ENCODE measurements at regions of chr11 and their contacts with region 1.

Region 1: GRCh38 chr11:12087075-12088004 is 23.1 kb upstream of the MICAL2 start:
- DNase-seq: peak; percentile 74
- ATAC-seq: peak; percentile 16
- H3K4me3 ChIP-seq: peak overlapping the region; percentile 51; the same call in 1 of the 2 replicates
- H3K27ac ChIP-seq: peak overlapping the region; percentile 99
- H3K4me1 ChIP-seq: peaks cover 72% of the 10 kb centered on the region
- H3K27me3 ChIP-seq: no peaks in the 10 kb centered on the region
- CTCF ChIP-seq: 0 out of 2 replicates have a peak, but pooled peaks have one; percentile 11

Region 2: DNA sequence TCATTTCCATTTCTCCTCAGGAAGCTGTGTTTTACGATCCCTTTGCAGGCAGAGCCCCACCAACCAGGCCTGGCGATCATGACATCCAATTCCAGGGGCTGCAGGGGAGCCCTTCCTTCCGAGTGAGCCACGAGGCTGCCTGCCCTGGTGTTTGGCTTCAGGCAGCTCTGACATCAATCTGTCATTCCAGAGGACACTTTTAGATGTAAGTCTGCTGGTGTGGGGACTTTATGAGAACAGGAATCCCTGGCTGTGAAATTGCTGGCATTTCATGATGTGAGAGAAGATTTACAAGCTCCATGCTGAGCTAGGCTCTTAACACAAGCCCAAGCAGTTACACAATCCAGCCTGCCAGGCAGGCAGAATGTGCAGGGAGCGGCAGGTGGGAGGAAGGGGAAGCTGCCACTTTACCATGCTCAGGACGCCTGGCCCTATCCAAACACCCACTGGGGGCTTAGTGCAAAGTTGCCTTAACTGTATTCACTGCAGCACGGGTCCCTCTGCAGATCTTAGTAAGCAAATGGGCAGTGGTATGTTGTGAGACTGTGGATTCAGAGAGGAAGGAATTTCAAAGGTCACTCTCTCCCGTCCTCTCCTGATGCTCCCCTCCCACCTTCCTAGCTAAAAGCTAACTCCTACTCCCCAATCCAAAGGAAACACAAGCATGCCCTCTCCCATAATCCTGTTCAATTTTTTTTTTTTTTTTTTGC is 20.4 kb before region 1 on chr11:
- CTCF ChIA-PET with region 1: interaction called, 3 read pairs
- POLR2A ChIA-PET with region 1: interaction called, 24 read pairs
- intact Hi-C with region 1: loop called (anchors 1 kb)
- DNase-seq: peak; percentile 50
- ATAC-seq: peak; percentile 45
- H3K4me3 ChIP-seq: no peak overlapping the region; the same call in 1 of the 2 replicates
- H3K27ac ChIP-seq: peak overlapping the region; percentile 86
- H3K4me1 ChIP-seq: peaks cover 48% of the 10 kb centered on the region
- H3K27me3 ChIP-seq: no peaks in the 10 kb centered on the region
- CTCF ChIP-seq: no peak

Region 3: GRCh38 chr11:12126344-12127019 is 39.1 kb after region 1 on chr11:
- CTCF ChIA-PET with region 1: no interaction called
- POLR2A ChIA-PET with region 1: no interaction called
- intact Hi-C with region 1: no loop called
- DNase-seq: peak; percentile 65
- ATAC-seq: peak; percentile 10
- H3K4me3 ChIP-seq: peak overlapping the region; percentile 14; the same call in 1 of the 2 replicates
- H3K27ac ChIP-seq: peak overlapping the region; percentile 84
- H3K4me1 ChIP-seq: peaks cover 57% of the 10 kb centered on the region
- H3K27me3 ChIP-seq: no peaks in the 10 kb centered on the region
- CTCF ChIP-seq: no peak

Region 4: GRCh38 chr11:12159351-12160099 is 72.2 kb after region 1 on chr11:
- CTCF ChIA-PET with region 1: no interaction called
- POLR2A ChIA-PET with region 1: interaction called, 13 read pairs
- intact Hi-C with region 1: loop called (anchors 5 kb)
- DNase-seq: peak; percentile 69
- ATAC-seq: peak; percentile 69
- H3K4me3 ChIP-seq: no peak overlapping the region
- H3K27ac ChIP-seq: peak overlapping the region; percentile 48
- H3K4me1 ChIP-seq: peaks cover 43% of the 10 kb centered on the region
- H3K27me3 ChIP-seq: no peaks in the 10 kb centered on the region
- CTCF ChIP-seq: peak; percentile 32; the same call in 1 of the 2 replicates